Naive thymus-derived CD4-positive, alpha-beta T cell (primary cell): ENCODE measurements at regions of chr10 and their contacts with region 1.

Region 1: DNA sequence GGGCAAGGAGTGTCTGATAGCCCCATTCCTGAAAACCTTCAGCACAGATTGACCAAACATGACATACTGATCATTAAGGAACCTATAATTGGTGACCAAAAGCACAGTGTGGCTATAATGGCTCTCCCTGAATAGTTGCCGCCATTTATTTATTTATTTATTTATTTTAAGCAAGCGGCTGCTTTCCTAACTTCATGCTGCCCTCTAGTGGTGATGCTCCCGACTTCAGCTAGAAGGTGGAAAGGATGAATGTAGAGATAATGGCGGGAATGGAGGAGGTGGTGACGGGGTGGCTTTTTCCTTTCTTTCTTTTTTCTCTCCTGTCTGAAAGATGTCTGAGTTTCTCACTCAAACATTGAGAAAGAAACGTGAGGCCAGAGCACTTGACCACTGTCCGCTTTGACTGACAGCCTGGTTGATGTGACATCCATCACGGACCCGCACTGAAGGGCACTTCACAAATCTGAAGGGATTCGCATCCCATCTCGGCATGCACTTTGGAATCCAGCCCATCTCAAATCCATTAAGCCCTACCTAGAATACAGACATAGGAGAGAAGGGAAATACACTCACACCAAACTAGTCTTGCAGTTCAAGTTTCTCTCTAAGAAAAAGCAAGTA is 1090.1 kb downstream of the KCNMA1 start:
- DNase-seq: peak in 6 of 9 donors; percentile 5 to 52 (median 12)
- ATAC-seq: peak; percentile 51
- H3K4me3 ChIP-seq: no peak overlapping the region
- H3K4me3 Mint-ChIP-seq: no peak overlapping the region
- H3K27ac ChIP-seq: no peak overlapping the region
- H3K27ac Mint-ChIP-seq: no peak overlapping the region
- H3K4me1 ChIP-seq: no peaks in the 10 kb centered on the region
- H3K4me1 Mint-ChIP-seq: peaks cover 0 to 1% (median 0%) of the 10 kb centered on the region in 7 donors
- H3K27me3 ChIP-seq: no peaks in the 10 kb centered on the region
- H3K27me3 Mint-ChIP-seq: peaks cover 0 to 13% (median 7%) of the 10 kb centered on the region in 5 donors

Region 2: GRCh38 chr10:76643511-76643911 is 96.0 kb after region 1 on chr10:
- CTCF ChIA-PET with region 1: no interaction called
- POLR2A ChIA-PET with region 1: no interaction called
- intact Hi-C with region 1: no loop called
- DNase-seq: no peak
- ATAC-seq: no peak
- H3K4me3 ChIP-seq: no peak overlapping the region
- H3K4me3 Mint-ChIP-seq: no peak overlapping the region
- H3K27ac ChIP-seq: no peak overlapping the region
- H3K27ac Mint-ChIP-seq: no peak overlapping the region
- H3K4me1 ChIP-seq: no peaks in the 10 kb centered on the region
- H3K4me1 Mint-ChIP-seq: no peaks in the 10 kb centered on the region
- H3K27me3 ChIP-seq: no peaks in the 10 kb centered on the region
- H3K27me3 Mint-ChIP-seq: no peaks in the 10 kb centered on the region

Region 3: DNA sequence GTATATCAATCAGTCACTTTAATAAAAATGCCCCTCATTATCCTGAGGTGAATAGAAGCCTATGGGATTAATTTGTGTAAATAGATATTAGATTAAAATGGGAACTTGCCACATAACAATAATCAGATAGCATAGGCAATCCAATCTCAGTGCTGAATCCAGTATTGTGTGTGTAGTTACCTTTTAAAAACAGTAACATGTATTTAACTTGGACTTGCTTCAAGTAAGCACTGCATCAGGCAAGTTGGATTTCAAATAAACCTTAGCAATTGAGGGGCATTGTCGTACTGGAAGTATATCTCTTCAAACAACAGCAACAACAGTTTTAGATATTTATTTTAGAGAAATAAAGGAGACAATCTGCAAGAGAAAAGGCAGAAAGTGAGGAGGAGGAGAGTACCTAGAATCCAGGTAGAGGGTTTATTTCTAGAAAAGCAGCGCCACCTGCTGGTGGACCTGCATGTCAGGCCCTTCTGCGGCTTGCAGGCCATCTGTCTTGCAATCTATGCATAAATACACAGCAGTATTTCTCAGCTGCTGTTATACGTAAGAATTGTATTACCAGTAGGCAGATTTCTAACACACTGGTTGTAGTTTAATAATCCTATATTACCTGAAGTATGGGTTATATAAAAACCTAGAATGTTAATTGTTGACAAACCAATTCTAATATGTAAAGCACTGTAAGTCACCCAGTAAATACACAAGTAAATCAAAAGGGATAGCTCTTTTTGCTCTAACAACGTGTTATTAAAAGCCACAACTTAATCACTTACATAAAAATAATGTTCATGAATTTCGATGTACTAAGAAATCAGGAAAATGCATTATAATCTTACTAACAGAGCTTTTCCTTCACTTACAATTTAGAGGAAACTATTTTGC is 437.3 kb after region 1 on chr10:
- CTCF ChIA-PET with region 1: no interaction called
- POLR2A ChIA-PET with region 1: no interaction called
- intact Hi-C with region 1: loop called in 1 of 2 experiments (anchors 10 kb)
- DNase-seq: peak; percentile 14 to 58 (median 51)
- ATAC-seq: peak; percentile 50
- H3K4me3 ChIP-seq: no peak overlapping the region
- H3K4me3 Mint-ChIP-seq: no peak overlapping the region
- H3K27ac ChIP-seq: no peak overlapping the region
- H3K27ac Mint-ChIP-seq: no peak overlapping the region
- H3K4me1 ChIP-seq: no peaks in the 10 kb centered on the region
- H3K4me1 Mint-ChIP-seq: no peaks in the 10 kb centered on the region
- H3K27me3 ChIP-seq: no peaks in the 10 kb centered on the region
- H3K27me3 Mint-ChIP-seq: peaks cover 0 to 11% (median 6%) of the 10 kb centered on the region in 5 donors

Region 4: DNA sequence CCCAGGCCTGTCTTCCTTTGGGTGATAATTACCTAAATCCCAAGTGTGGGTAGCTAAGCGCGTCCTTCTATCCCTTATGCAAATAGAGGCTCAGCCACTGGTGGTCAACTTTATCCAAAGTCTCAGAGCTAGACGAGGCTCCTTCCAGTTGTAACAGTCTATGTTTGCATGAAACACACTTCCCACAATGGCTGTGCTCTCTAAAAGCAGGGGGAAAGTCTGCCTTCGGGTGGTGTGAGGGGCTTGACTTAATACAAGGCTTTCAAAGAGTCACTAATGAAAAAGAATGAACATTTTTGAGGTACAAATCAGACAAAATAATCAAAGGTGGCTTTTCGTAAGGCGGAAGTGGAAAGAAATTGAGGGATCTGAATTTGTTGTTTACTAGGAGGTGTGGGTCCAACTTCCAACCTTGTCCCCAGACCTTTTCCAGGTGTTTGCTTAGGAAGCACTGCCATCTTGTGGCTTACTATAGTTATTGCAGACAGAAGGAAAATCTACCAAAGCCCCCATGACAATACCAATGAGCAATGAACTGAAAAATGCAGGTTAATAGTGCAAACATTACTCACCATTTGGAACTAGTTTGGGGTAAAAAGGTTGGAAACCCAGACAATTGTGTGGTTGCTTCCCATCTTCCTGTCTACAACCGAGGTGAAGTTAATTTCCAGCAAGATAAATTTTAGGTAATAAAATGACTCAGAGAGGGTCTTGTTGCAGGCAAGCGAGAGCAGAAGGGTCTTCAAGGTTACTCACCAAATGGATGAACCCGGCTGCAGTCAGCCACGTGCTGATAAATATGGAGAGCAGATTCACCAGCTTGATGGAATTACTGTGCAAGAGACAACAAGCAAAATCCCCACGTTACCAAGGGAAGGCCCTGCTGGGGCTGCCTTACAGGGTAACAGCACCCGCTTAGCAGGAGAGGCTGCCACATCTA is 564.4 kb after region 1 on chr10:
- CTCF ChIA-PET with region 1: no interaction called
- POLR2A ChIA-PET with region 1: no interaction called
- intact Hi-C with region 1: loop called in 1 of 2 experiments (anchors 5 kb)
- DNase-seq: peak in 5 of 9 donors; percentile 12 to 39 (median 28)
- ATAC-seq: peak; percentile 57
- H3K4me3 ChIP-seq: no peak overlapping the region
- H3K4me3 Mint-ChIP-seq: no peak overlapping the region
- H3K27ac ChIP-seq: no peak overlapping the region
- H3K27ac Mint-ChIP-seq: no peak overlapping the region
- H3K4me1 ChIP-seq: no peaks in the 10 kb centered on the region
- H3K4me1 Mint-ChIP-seq: no peaks in the 10 kb centered on the region
- H3K27me3 ChIP-seq: no peaks in the 10 kb centered on the region
- H3K27me3 Mint-ChIP-seq: peaks cover 0 to 12% (median 0%) of the 10 kb centered on the region in 5 donors